ENCODE measurements at regions of chr1 and their contacts with region 1.

Region 1: GRCh38 chr1:76074321-76075187 is at the start of gene ST6GALNAC3:
- DNase-seq: peak; percentile 54 to 86 (median 77)
- ATAC-seq: peak; percentile 95
- H3K4me3 ChIP-seq: peak within 1 kb of the TSS; percentile 74 to 79
- H3K4me3 Mint-ChIP-seq: peak within 1 kb of the TSS; percentile 87
- H3K27ac ChIP-seq: peak within 1 kb of the TSS; percentile 34 to 56
- H3K27ac Mint-ChIP-seq: peak within 1 kb of the TSS; percentile 83
- H3K4me1 ChIP-seq: peaks cover 15% of the 10 kb centered on the region
- H3K4me1 Mint-ChIP-seq: peaks cover 29% of the 10 kb centered on the region
- H3K27me3 ChIP-seq: no peaks in the 10 kb centered on the region
- H3K27me3 Mint-ChIP-seq: peaks cover 5% of the 10 kb centered on the region
- CTCF ChIP-seq: no peak
- total RNA-seq, gene ST6GALNAC3: 1.4 to 2.3 TPM

Region 2: DNA sequence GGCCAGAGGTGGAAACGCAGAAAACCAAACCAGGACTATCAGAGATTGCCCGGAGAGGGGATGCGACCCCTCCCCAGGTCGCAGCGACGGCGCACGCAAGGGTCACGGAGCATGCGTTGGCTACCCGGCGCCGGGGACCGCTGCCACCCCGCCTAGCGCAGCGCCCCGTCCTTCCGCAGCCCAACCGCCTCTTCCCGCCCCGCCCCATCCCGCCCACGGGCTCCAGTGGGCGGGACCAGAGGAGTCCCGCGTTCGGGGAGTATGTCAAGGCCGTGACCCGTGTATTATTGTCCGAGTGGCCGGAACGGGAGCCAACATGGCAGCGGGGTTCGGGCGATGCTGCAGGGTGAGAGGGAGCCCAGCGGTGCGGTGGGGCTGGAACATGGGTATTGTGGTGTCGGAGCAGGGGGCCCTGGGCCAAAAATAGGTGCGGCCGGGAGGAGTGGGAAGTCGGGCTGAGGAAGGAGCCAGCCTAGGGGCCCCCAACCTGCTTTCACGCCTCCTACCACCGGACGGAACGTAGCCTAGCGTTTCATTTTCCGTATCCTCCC is 350.0 kb before region 1 on chr1 and contains the start of gene ACADM:
- CTCF ChIA-PET with region 1: no interaction called
- POLR2A ChIA-PET with region 1: no interaction called
- intact Hi-C with region 1: loop called (anchors 2 to 5 kb)
- DNase-seq: peak; percentile 58 to 90 (median 79)
- ATAC-seq: peak; percentile 96
- H3K4me3 ChIP-seq: peak within 1 kb of the TSS; percentile 98
- H3K4me3 Mint-ChIP-seq: peak within 1 kb of the TSS; percentile 98
- H3K27ac ChIP-seq: peak within 1 kb of the TSS; percentile 78 to 82
- H3K27ac Mint-ChIP-seq: peak within 1 kb of the TSS; percentile 97
- H3K4me1 ChIP-seq: peaks cover 34% of the 10 kb centered on the region
- H3K4me1 Mint-ChIP-seq: peaks cover 60% of the 10 kb centered on the region
- H3K27me3 ChIP-seq: no peaks in the 10 kb centered on the region
- H3K27me3 Mint-ChIP-seq: no peaks in the 10 kb centered on the region
- CTCF ChIP-seq: no peak
- total RNA-seq, gene ACADM: 5.8 to 6.0 TPM

Region 3: GRCh38 chr1:76012341-76013208 is 62.0 kb before region 1 on chr1:
- CTCF ChIA-PET with region 1: no interaction called
- POLR2A ChIA-PET with region 1: no interaction called
- intact Hi-C with region 1: no loop called
- DNase-seq: no peak
- ATAC-seq: no peak
- H3K4me3 ChIP-seq: no peak overlapping the region
- H3K4me3 Mint-ChIP-seq: no peak overlapping the region
- H3K27ac ChIP-seq: no peak overlapping the region
- H3K27ac Mint-ChIP-seq: no peak overlapping the region
- H3K4me1 ChIP-seq: no peaks in the 10 kb centered on the region
- H3K4me1 Mint-ChIP-seq: no peaks in the 10 kb centered on the region
- H3K27me3 ChIP-seq: no peaks in the 10 kb centered on the region
- H3K27me3 Mint-ChIP-seq: no peaks in the 10 kb centered on the region
- CTCF ChIP-seq: no peak

Region 4: DNA sequence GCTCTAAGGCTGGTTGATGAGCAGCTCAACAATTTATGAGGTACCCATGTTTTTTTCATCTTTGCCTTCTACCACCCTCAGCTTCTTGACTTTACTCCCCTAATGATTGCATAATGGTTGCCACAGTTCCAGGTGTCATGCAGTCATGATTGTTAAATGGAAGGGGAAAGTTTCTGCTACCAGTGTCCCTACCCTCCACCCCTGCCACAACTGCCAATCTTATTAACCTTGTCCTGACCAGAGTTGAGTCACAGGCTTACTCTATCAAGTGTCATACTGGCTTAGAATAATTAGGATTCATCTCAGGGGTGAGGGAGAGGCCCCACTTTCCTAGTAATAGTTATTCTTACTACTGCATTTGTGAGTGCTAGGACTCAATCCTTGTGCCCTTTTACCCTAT is 1912.3 kb after region 1 on chr1:
- CTCF ChIA-PET with region 1: no interaction called
- POLR2A ChIA-PET with region 1: no interaction called
- intact Hi-C with region 1: loop called in 1 of 2 experiments (anchors 10 kb)
- DNase-seq: no peak
- ATAC-seq: no peak
- H3K4me3 ChIP-seq: no peak overlapping the region
- H3K4me3 Mint-ChIP-seq: no peak overlapping the region
- H3K27ac ChIP-seq: no peak overlapping the region
- H3K27ac Mint-ChIP-seq: no peak overlapping the region
- H3K4me1 ChIP-seq: peaks cover 3% of the 10 kb centered on the region
- H3K4me1 Mint-ChIP-seq: peaks cover 32% of the 10 kb centered on the region
- H3K27me3 ChIP-seq: no peaks in the 10 kb centered on the region
- H3K27me3 Mint-ChIP-seq: no peaks in the 10 kb centered on the region
- CTCF ChIP-seq: no peak

Measured in CD8-positive, alpha-beta T cell (primary cell).